ENCODE measurements at regions of chr1 and their contacts with region 1.

Region 1: DNA sequence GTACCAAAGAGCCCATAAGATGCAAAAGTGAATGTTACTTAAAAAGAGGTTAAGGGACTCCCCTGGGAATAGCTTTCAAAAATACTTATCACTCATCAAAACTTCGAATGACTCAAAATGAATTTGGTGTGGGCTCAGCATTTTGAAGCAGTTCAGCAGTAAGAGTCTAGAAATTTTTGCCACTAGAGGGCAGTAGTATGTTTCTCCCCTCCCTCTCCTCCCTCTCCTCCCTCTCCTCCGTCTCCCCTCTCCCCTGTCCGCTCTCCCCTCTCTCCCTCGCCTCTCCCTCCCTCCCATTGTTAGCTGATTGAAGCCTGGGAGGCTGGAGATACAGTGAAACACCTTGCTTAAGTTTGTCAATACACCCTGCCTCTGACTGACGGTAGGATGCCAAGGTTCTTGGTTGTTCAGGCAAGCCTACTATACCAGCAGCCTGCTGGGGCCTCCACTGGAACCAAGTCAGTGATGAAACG is 70.8 kb upstream of the TENT5C start:
- DNase-seq: peak; percentile 43
- H3K4me3 ChIP-seq: no peak overlapping the region
- H3K27ac ChIP-seq: no peak overlapping the region
- H3K4me1 ChIP-seq: no peaks in the 10 kb centered on the region
- H3K27me3 ChIP-seq: no peaks in the 10 kb centered on the region
- CTCF ChIP-seq: peak; percentile 54

Region 2: DNA sequence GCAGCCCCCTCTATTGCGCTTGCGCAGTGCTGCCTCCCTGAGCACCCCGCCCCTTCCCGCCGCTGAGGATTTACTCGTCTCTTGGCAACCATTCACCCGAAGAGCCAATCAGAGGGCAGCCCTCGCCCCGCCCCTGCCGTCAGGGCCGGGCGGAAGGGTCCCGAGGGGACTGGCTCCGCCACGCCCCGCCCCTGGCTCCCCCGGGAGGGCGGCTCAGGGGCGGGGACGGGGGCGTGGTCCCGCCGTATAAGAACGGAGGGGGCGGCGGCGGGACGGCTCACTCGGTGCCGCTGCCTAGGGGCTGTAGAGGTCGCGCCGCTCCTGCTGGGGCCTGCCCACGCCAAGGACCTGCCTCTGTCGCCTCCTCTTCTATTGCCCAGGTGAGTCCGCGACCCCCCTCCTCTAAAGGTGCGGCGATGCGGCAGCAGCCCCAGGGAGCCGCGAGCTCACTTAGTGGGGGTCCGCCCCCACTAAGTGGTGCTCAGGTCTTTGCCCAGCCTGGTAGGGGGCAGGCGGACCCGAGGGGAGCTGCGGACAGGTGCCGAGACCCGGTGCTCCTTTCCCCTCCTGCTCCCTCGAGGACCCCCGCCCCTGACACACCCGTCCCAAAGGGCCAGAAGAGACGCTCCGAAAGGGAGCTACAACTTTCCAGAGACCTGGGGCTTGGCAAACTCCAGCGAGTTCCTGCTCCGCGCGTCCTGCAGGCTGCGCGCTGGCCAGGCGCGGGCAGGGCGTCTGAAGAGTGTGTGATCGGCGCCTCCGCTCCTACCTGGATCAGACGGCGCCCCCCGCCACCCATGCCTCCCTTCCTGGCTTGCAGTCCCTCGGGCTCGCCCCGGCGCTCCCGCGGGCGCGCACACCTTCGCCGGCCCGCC is 71.0 kb after region 1 on chr1 and contains the start of gene TENT5C:
- intact Hi-C with region 1: no loop called
- DNase-seq: peak; percentile 99
- H3K4me3 ChIP-seq: peak within 1 kb of the TSS; percentile 91
- H3K27ac ChIP-seq: peak within 1 kb of the TSS; percentile 87
- H3K4me1 ChIP-seq: peaks cover 3% of the 10 kb centered on the region
- H3K27me3 ChIP-seq: no peaks in the 10 kb centered on the region
- CTCF ChIP-seq: no peak
- total RNA-seq, gene TENT5C: 40.7 to 58.5 TPM

Region 3: DNA sequence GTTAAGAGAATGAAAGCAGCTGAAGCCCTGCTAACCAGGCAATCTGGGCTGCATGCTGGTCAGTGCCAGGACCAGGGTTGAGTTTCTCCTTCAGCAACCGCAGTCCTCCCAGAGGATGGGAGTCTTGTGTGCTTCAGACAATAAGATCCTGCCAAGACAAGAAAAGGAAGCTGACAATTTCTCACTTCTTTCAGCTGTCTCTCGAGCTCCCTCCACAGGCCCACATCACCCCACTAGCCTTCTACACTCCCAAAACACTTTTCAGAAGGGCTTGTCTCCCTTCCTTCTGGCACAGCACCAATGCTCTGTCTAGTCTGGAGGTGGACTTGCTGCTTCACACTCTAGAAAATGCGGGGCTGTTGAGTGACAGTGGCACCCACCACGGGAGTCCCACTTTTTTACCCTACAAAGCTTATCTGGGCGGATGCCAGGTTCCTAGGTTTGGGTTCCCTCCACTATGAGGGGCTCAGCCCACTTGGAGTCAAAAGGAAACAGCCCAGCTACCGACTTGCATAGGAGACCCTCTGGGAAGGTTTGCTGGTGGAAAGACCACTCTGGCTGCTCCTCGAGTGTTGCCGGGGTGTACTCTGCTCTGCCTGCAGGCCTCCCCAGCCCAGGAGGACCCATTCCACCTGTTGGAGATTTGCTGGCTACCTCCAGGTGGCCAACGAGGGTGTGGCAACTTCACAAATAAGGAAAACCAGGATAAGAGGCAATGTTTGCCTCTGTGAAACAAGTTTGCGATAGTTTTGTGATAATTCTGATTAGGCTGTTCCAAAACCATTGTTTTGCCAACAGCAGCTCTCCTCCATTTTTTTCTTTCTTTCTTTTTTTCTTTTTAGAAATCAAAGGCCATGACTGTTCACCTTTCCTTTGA is 139.7 kb after region 1 on chr1:
- intact Hi-C with region 1: loop called (anchors 5 kb)
- DNase-seq: peak; percentile 69
- H3K4me3 ChIP-seq: no peak overlapping the region
- H3K27ac ChIP-seq: peak overlapping the region; percentile 3
- H3K4me1 ChIP-seq: peaks cover 20% of the 10 kb centered on the region
- H3K27me3 ChIP-seq: no peaks in the 10 kb centered on the region
- CTCF ChIP-seq: no peak